Head of caudate nucleus (tissue), 42 donors: ENCODE measurements at regions of chr14 and their contacts with region 1.

Region 1: DNA sequence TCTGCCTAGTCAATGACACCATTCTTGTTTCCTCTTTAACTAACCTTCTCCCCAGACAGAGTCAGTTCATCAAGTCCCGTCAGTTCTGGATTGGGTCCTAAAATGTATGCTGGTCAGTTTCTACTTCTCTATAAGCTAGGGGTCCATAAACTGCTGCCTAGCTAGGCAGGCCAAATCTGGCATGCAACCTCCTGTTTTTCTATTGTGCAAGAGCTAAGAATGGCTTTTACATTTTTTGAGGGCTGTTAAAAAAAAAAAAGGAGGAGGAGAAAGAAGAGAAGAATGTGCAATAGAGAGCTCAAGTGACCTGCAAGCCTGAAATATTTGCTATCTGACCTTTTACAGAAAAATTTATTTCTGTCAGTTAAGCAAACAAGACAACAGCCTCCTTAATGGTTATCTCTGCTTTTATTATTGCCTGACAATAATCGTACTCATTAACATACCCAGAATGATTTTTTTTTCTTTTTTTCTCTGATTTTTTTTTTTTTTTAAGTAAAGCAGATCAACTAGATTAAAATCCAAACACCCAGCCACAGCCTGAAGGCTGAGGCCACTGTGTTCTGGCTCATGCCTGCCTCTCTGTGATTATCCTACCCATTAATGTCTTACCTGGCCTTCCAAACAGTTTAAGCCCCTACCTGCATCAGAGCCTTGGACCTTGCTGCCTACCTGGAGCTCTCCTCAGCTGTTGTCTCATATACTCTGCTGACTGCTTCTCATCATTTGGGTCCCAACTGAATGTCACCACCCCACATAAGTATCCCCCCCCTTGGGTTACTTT is 6.6 kb upstream of the TMED10 start:
- DNase-seq: no peak

Region 2: GRCh38 chr14:75147423-75148071 is 35.5 kb before region 1 on chr14:
- intact Hi-C with region 1: no loop called
- DNase-seq: peak; percentile 43 to 94 (median 83)

Region 3: DNA sequence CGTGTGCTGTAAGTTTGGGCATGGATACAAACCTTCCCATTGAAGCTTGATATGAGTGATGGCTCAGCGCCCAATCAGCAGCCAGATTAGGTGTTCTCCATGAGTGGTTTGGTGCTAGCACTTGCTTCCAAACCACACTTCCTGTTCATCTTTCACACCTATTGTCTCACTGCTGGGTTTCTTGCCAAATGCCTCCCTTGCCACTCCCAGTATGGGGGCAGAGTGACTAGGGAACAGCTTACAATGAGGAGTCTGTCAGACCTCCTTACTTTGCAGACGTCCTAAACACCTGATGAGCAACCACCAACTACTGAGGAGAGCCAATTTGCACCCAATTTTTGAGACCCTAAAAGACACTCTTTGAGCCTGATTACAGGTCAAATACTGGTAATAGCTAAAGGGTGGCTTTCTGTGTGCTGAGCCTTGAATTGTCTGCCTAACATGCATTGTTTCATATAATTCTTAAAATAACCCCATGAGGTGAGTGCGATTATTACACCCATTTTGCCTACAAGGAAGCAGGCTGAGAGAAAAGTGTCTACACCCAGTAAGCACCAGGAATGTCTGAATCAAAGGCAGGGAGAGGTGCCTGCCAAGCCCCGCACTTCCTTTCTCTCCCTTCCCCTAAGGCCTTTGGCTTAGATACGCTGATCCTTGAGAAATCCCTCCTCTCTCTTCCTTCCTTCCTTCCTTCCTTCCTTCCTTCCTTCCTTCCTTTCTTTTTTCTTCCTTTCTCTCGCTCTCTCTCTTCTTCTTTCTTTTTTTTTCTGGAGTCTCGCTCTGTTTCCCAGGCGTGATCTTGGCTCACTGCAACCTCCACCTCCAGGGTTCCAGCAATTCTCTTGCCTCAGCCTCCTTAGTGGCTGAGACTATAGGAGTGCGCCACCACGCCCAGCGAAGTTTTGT is 47.4 kb after region 1 on chr14:
- intact Hi-C with region 1: loop called (anchors 10 kb)
- DNase-seq: peak in 26 of 42 donors; percentile 7 to 79 (median 38)

Region 4: GRCh38 chr14:75293920-75294642 is 111.0 kb after region 1 on chr14:
- intact Hi-C with region 1: no loop called
- DNase-seq: peak; percentile 78 to 98 (median 95)